ENCODE measurements at regions of chr3 and their contacts with region 1.

Region 1: GRCh38 chr3:184145111-184145524 is 10.0 kb downstream of the EIF2B5 start:
- DNase-seq: peak; percentile 49
- ATAC-seq: peak; percentile 80
- H3K4me3 ChIP-seq: no peak overlapping the region
- H3K27ac ChIP-seq: no peak overlapping the region
- H3K4me1 ChIP-seq: peaks cover 7% of the 10 kb centered on the region
- H3K27me3 ChIP-seq: no peaks in the 10 kb centered on the region
- CTCF ChIP-seq: peak; percentile 81
- EP300 ChIP-seq: no peak
- POLR2A ChIP-seq: peak in 1 of 2 experiments; percentile 20; a peak in 2 of 4 replicates
- RAD21 ChIP-seq: peak; percentile 71

Region 2: DNA sequence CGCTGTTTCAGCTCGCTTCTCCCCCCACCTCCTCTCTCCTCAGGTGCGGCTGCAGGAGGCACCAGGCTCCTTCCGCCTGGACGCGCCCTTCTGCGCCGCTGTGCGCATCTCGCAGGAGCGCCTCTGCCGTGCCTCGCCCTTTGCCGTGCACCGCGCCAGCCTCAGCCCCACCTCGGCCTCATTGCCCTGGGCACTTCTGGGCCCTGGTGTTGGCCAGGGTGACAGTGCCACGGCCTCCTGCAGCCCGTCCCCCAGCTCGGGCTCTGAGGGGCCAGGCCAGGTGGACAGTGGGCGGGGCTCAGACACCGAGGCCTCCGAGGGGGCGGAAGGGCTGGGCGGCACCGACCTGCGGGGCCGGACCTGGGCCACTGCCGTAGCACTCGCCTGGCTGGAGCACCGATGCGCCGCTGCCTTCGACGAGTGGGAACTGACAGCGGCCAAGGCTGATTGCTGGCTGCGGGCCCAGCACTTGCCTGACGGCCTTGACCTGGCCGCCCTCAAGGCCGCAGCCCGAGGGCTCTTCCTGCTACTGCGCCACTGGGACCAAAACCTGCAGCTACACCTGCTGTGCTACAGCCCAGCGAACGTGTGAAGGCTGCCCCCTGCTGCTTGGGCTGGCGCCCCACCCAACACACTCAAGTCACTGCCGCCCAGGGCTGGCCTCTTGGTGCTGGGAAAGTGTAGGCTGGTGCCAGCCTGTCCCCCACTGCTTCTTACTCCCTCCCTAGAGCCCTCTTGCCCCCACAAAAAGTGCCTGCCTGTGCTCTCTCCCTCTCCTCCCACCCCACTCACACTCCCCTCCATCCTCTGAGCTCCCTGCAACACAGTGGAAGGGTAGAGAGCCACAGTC is 96.6 kb after region 1 on chr3:
- CTCF ChIA-PET with region 1: no interaction called
- POLR2A ChIA-PET with region 1: interaction called, 4 read pairs
- in situ Hi-C with region 1: no loop called
- intact Hi-C with region 1: loop called (anchors 1 kb)
- DNase-seq: peak; percentile 86
- ATAC-seq: peak; percentile 92
- H3K4me3 ChIP-seq: peak overlapping the region in 1 of 3 experiments; percentile 2; a peak in 1 of 6 replicates
- H3K27ac ChIP-seq: peak overlapping the region; percentile 24
- H3K4me1 ChIP-seq: peaks cover 25% of the 10 kb centered on the region
- H3K27me3 ChIP-seq: peaks cover 0 to 22% of the 10 kb centered on the region in 2 experiments; a peak in 3 of 5 replicates
- CTCF ChIP-seq: peak; percentile 99
- EP300 ChIP-seq: peak in 1 of 2 experiments; percentile 70; a peak in 1 of 4 replicates
- POLR2A ChIP-seq: no peak
- RAD21 ChIP-seq: peak; percentile 99

Measured in HepG2 (cell line).